ENCODE measurements at regions of chr19 and their contacts with region 1.

Region 1: GRCh38 chr19:36772311-36773222 is at the start of gene ZNF850:
- DNase-seq: peak; percentile 98
- ATAC-seq: peak; percentile 99
- H3K4me3 ChIP-seq: peak within 1 kb of the TSS; percentile 42 to 82
- H3K27ac ChIP-seq: peak within 1 kb of the TSS in 1 of 2 donors; percentile 60
- H3K4me1 ChIP-seq: no peaks in the 10 kb centered on the region
- H3K27me3 ChIP-seq: no peaks in the 10 kb centered on the region
- total RNA-seq, gene ZNF850: 3.6 to 4.2 TPM

Region 2: GRCh38 chr19:36837906-36838783 is 65.6 kb after region 1 on chr19 and contains the start of gene ZNF790:
- intact Hi-C with region 1: loop called in 1 of 2 experiments (anchors 2 kb)
- DNase-seq: peak; percentile 94 to 96
- ATAC-seq: peak; percentile 99
- H3K4me3 ChIP-seq: peak within 1 kb of the TSS; percentile 11 to 52
- H3K27ac ChIP-seq: peak within 1 kb of the TSS in 1 of 2 donors; percentile 76
- H3K4me1 ChIP-seq: no peaks in the 10 kb centered on the region
- H3K27me3 ChIP-seq: no peaks in the 10 kb centered on the region
- total RNA-seq, gene ZNF790: 7.6 to 11.8 TPM

Region 3: DNA sequence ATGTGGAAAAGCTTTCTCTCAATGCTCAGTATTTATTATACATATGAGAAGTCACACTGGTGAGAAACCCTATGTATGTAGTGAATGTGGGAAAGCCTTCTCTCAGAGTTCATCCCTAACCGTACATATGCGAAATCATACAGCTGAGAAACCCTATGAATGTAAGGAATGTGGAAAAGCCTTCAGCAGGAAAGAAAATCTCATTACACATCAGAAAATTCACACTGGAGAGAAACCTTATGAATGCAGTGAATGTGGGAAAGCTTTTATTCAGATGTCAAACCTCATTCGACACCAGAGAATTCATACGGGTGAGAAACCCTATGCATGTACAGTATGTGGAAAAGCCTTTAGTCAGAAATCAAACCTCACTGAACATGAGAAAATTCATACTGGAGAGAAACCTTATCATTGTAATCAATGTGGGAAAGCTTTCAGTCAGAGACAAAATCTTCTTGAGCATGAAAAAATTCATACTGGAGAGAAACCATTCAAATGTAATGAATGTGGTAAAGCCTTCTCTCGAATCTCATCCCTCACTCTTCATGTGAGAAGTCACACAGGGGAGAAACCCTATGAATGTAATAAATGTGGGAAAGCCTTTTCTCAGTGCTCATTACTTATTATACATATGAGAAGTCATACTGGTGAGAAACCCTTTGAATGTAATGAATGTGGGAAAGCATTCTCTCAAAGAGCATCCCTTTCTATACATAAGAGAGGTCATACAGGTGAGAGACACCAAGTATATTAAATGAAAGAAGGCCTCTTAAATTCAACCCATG is 178.0 kb after region 1 on chr19:
- intact Hi-C with region 1: no loop called
- DNase-seq: no peak
- ATAC-seq: no peak
- H3K4me3 ChIP-seq: no peak overlapping the region
- H3K27ac ChIP-seq: no peak overlapping the region
- H3K4me1 ChIP-seq: no peaks in the 10 kb centered on the region
- H3K27me3 ChIP-seq: no peaks in the 10 kb centered on the region

Measured in aorta (tissue), 5 donors.